Heart right ventricle (tissue), 16 donors: ENCODE measurements at regions of chr2 and their contacts with region 1.

Region 1: GRCh38 chr2:98412751-98413458 is 31.8 kb upstream of the INPP4A start:
- DNase-seq: peak in 1 of 2 donors; percentile 56
- ATAC-seq: peak; percentile 74 to 91 (median 82)
- H3K4me3 ChIP-seq: no peak overlapping the region
- H3K27ac ChIP-seq: no peak overlapping the region
- H3K4me1 ChIP-seq: peaks cover 0 to 8% (median 5%) of the 10 kb centered on the region in 9 donors
- H3K27me3 ChIP-seq: no peaks in the 10 kb centered on the region
- CTCF ChIP-seq: peak; percentile 73 to 88 (median 80)

Region 2: DNA sequence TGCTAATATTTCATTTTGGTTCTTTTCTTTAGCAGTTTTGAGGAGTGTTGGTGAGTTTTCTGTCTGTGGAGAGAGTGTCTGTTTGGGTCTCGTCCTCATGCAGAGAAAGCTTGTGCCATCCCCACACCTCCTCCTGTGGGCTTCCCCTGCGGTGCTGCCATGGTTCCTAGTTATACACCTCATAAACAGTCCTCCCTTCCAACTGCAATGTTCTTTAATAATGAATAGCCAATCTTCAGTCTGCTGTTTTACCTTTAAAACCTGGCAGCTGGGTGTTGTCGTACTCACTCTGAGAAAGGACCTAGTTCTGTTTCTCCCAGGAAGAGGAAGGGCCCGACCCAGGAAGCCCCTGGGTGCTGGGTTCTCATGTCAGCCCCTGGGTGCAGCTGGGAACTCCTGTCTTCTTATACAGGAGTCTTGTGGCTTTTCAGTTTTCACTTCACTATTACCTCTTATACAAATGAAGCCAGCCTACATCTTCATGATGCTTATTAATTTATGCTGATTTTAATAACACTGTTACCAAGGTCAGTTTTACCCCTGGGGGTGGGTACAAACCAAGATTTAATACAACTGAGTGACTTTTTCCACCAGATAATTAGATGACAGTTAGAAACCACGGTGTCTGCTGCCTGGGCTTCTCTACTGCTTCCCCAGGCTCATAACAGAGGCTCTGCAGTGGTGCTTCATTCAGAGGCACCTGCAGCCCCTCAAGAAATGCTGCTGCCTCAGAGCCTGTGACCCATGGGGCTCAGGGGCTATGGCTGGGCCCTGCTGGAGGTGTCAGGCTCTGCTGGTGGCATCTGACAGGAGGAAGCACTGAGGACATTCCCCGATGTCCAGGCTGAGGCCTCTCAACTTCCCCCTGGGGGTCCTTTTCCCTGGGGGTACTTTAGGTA is 136.3 kb after region 1 on chr2:
- intact Hi-C with region 1: loop called in 2 of 10 experiments (anchors 10 kb)
- DNase-seq: no peak
- ATAC-seq: no peak
- H3K4me3 ChIP-seq: no peak overlapping the region
- H3K27ac ChIP-seq: no peak overlapping the region
- H3K4me1 ChIP-seq: peaks cover 0 to 3% (median 0%) of the 10 kb centered on the region in 9 donors
- H3K27me3 ChIP-seq: no peaks in the 10 kb centered on the region
- CTCF ChIP-seq: no peak

Region 3: GRCh38 chr2:98568881-98569793 is 156.2 kb after region 1 on chr2:
- intact Hi-C with region 1: loop called in 5 of 10 experiments (anchors 10 kb)
- DNase-seq: peak in 1 of 2 donors; percentile 56
- ATAC-seq: peak in 5 of 8 donors; percentile 13 to 50 (median 33)
- H3K4me3 ChIP-seq: no peak overlapping the region
- H3K27ac ChIP-seq: no peak overlapping the region
- H3K4me1 ChIP-seq: peaks cover 0 to 29% (median 21%) of the 10 kb centered on the region in 9 donors
- H3K27me3 ChIP-seq: no peaks in the 10 kb centered on the region
- CTCF ChIP-seq: peak; percentile 36 to 88 (median 82)

Region 4: DNA sequence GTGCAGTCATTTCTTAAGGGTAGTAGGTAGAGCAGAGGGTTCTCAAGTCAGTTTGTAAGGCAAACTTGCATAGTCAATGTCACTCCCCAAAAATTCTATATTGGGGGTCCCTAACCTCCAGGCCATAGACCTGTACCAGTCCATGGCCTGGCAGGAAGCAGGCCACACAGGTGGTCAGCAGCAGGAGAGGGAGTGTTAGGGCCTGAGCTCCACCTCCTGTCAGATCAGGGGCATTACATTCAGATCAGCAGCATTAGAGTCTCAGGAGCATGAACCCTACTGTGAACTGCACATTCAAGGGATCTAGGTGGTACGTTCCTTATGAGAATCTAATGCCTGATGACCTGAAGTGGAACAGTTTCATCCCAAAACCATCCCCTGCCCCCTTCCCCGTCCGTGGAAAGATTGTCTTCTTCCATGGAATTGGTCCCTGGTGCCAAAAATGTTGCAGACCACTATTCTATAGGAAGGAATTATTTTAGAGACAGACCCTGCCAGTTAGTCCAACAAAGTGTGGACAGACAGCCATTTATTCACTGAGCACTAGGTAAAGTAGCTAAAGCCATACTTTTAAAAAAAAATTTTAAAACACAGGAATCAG is 188.7 kb after region 1 on chr2:
- intact Hi-C with region 1: loop called in 9 of 10 experiments (anchors 2 to 10 kb)
- DNase-seq: no peak
- ATAC-seq: peak in 7 of 8 donors; percentile 62 to 84 (median 73)
- H3K4me3 ChIP-seq: no peak overlapping the region
- H3K27ac ChIP-seq: no peak overlapping the region
- H3K4me1 ChIP-seq: peaks cover 2 to 27% (median 20%) of the 10 kb centered on the region in 9 donors
- H3K27me3 ChIP-seq: no peaks in the 10 kb centered on the region
- CTCF ChIP-seq: peak; percentile 36 to 69 (median 63)

Region 5: DNA sequence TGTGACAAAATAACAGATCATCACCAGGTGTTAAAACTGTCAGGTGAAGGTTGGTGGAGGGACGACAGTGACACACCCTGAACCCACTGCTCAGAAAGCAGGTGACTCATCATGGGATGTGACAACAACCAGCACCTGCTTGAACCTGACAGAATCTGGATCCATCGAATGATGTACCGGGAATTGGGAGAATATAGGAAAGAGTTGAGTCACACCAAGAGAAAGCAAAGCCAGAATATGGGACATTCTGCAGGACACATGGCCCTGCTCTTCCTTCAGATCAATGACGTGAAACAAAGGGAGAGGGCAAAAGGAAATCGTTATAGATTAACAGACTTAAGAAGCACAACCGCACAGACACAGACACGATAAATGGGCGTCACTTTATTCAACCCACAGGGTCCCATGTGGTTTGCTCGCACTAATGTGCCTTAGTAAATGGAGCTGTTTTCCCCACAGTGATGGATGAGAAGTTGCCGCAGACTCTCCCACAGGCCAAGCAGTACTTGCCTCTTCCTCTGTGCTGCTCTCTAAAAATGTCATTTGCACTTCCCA is 423.0 kb after region 1 on chr2:
- intact Hi-C with region 1: loop called in 7 of 10 experiments (anchors 2 to 10 kb)
- DNase-seq: no peak
- ATAC-seq: no peak
- H3K4me3 ChIP-seq: no peak overlapping the region
- H3K27ac ChIP-seq: peak overlapping the region in 1 of 10 donors; percentile 48
- H3K4me1 ChIP-seq: peaks cover 0 to 23% (median 15%) of the 10 kb centered on the region in 9 donors
- H3K27me3 ChIP-seq: no peaks in the 10 kb centered on the region
- CTCF ChIP-seq: no peak